A549 (cell line): ENCODE measurements at regions of chr20 and their contacts with region 1.

Region 1: DNA sequence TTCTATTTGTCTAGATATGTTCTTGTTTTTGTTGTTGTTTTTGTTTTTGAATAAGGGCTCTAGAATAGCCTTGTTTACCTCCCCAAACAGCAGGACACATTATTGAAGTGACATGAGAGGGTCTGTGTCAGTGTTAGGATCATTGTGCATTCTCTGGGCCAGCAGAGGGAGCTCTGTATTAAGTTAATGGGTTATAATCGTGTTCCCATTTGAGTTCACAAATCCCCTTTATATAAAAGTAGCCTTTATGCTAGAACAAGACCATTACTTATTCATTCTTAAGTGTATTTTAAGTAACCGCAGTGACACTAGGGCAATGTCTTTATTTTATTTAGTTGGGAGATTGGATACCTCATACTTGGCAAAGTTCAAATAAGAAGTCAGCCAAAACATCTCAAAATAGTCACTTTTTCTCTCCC is 44.8 kb downstream of the STK4 start:
- DNase-seq: peak; percentile 46 to 47
- ATAC-seq: peak; percentile 90 to 91
- H3K4me3 ChIP-seq: no peak overlapping the region
- H3K27ac ChIP-seq: no peak overlapping the region
- H3K4me1 ChIP-seq: peaks cover 12% of the 10 kb centered on the region
- CTCF ChIP-seq: peak; percentile 92
- EP300 ChIP-seq: no peak
- POLR2A ChIP-seq: no peak
- RAD21 ChIP-seq: peak; percentile 74 to 82

Region 2: DNA sequence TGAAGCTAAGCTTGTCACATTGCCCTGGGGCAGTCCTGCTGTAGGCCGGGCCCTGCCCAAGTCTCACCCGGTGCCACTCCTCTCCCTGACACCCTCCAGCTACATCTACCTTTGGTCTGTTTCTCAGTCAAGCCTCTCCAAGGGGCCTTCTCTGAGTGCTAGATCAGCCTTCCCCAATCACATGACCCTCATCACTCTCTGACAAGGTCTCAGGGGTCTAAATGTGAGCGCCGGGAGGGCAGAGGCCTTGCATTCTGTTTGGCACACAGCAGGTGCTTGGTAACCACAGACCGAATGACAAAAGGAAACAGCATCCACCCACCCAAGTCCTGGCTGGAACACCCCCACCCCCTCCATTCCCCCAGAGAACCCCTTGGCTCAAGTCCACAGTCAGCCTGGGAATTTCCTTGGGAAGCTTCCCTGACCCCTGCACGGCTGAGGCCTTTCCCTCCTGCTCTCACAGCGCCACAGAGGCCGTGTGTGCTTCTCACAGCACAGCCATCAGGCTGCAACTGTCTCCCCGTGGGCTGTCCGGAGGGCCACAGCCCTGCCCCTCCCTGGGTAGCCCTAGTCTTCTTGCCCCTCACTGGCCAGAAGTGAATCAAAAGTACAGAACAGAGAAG is 395.8 kb before region 1 on chr20:
- CTCF ChIA-PET with region 1: no interaction called
- POLR2A ChIA-PET with region 1: no interaction called
- DNase-seq: no peak
- ATAC-seq: no peak
- H3K4me3 ChIP-seq: no peak overlapping the region
- H3K27ac ChIP-seq: no peak overlapping the region
- H3K4me1 ChIP-seq: 0 out of 3 replicates have a peak, but pooled peaks cover 2% of the 10 kb centered on the region
- CTCF ChIP-seq: no peak
- EP300 ChIP-seq: no peak
- POLR2A ChIP-seq: no peak
- RAD21 ChIP-seq: no peak

Region 3: GRCh38 chr20:44997171-44998067 is 13.7 kb before region 1 on chr20:
- CTCF ChIA-PET with region 1: interaction called, 27 read pairs
- POLR2A ChIA-PET with region 1: no interaction called
- DNase-seq: no peak
- ATAC-seq: no peak
- H3K4me3 ChIP-seq: no peak overlapping the region
- H3K27ac ChIP-seq: no peak overlapping the region
- H3K4me1 ChIP-seq: peaks cover 6% of the 10 kb centered on the region; the same call in 2 of the 3 replicates
- CTCF ChIP-seq: no peak
- EP300 ChIP-seq: no peak
- POLR2A ChIP-seq: no peak
- RAD21 ChIP-seq: no peak

Region 4: DNA sequence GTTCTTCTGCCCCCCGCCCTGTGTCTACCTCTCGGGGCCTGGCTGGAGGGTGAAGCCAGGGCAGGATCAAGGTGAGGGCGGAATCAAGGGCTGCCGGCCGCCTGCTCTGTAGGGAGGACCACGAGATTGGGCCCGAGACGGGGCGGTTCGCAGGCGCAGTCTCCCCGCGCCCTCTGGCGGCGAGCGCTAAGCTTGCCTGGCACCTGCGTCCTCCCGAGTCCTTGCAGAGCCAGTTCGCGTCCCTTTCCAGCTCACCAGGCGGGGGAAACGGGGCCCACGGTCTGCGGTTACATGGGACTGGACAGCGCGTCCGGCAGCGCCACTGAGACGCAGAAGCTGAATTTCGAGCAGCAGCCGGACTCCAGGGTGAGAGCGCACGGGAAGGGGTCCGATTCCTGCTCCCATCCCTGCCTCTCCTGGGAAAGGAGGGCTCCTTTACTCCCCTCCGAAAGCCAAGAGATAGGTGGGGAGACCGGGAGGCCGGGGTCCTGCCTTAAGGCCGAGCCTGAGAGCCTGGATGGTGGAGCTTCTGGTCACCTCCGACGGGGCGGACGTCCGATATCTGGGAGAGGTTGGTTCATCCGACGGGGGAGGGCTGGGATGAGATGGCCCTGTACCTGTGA is 300.6 kb after region 1 on chr20:
- CTCF ChIA-PET with region 1: interaction called, 11 read pairs
- POLR2A ChIA-PET with region 1: no interaction called
- DNase-seq: peak; percentile 75 to 78
- ATAC-seq: peak; percentile 79 to 94
- H3K4me3 ChIP-seq: no peak overlapping the region; the same call in 2 of the 3 replicates
- H3K27ac ChIP-seq: peak overlapping the region in 1 of 2 experiments; percentile 41; a peak in 1 of 6 replicates
- H3K4me1 ChIP-seq: no peaks in the 10 kb centered on the region
- CTCF ChIP-seq: peak; percentile 77
- EP300 ChIP-seq: no peak
- POLR2A ChIP-seq: no peak
- RAD21 ChIP-seq: peak; percentile 60 to 68